ENCODE measurements at regions of chr22 and their contacts with region 1.

Region 1: GRCh38 chr22:50306753-50307749 is at the start of gene PLXNB2:
- DNase-seq: no peak
- H3K4me3 ChIP-seq: peak within 1 kb of the TSS; percentile 98
- H3K27me3 ChIP-seq: no peaks in the 10 kb centered on the region
- CTCF ChIP-seq: no peak
- polyA plus RNA-seq, gene PLXNB2: 83.7 and 143 TPM in 2 replicates

Region 2: GRCh38 chr22:50293441-50294318 is 13.4 kb before region 1 on chr22:
- CTCF ChIA-PET with region 1: interaction called, 20 read pairs
- POLR2A ChIA-PET with region 1: interaction called, 3 read pairs
- DNase-seq: no peak
- H3K4me3 ChIP-seq: peak overlapping the region; percentile 25
- H3K27me3 ChIP-seq: no peaks in the 10 kb centered on the region
- CTCF ChIP-seq: no peak

Region 3: GRCh38 chr22:50437511-50438304 is 130.7 kb after region 1 on chr22:
- CTCF ChIA-PET with region 1: no interaction called
- POLR2A ChIA-PET with region 1: interaction called, 25 read pairs
- DNase-seq: no peak
- H3K4me3 ChIP-seq: no peak overlapping the region
- H3K27me3 ChIP-seq: no peaks in the 10 kb centered on the region
- CTCF ChIP-seq: no peak